A673 (cell line): ENCODE measurements at regions of chr11 and their contacts with region 1.

Region 1: GRCh38 chr11:107928046-107928766 is at the start of gene RAB39A:
- DNase-seq: peak; percentile 99
- H3K4me3 ChIP-seq: peak within 1 kb of the TSS; percentile 65
- H3K27ac ChIP-seq: peak within 1 kb of the TSS; percentile 64
- H3K4me1 ChIP-seq: peaks cover 3% of the 10 kb centered on the region
- H3K27me3 ChIP-seq: peaks cover 13% of the 10 kb centered on the region
- CTCF ChIP-seq: no peak
- total RNA-seq, gene RAB39A: 16.3 and 17.2 TPM in 2 replicates

Region 2: DNA sequence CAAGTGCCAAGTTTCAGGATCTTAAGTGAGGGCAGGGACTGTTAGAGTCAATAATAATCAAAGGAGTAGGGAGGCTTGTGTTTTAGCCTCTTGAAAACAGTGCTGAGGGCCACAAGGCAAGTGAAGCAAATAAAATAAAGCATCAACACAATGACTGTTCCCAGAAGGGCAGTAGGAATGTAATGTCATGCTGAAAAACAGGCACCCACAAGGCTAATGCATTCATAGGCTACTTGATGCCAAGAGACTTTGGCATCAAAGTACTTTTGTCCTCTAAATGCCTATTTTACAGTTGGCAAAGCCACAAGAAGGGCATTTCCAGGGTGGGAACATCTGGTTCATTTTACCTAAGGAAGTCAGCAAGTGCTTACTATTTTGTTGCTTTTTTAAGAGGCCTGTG is 22.9 kb after region 1 on chr11:
- CTCF ChIA-PET with region 1: no interaction called
- POLR2A ChIA-PET with region 1: no interaction called
- intact Hi-C with region 1: no loop called
- DNase-seq: no peak
- H3K4me3 ChIP-seq: no peak overlapping the region
- H3K27ac ChIP-seq: no peak overlapping the region
- H3K4me1 ChIP-seq: peaks cover 2% of the 10 kb centered on the region
- H3K27me3 ChIP-seq: no peaks in the 10 kb centered on the region
- CTCF ChIP-seq: no peak

Region 3: DNA sequence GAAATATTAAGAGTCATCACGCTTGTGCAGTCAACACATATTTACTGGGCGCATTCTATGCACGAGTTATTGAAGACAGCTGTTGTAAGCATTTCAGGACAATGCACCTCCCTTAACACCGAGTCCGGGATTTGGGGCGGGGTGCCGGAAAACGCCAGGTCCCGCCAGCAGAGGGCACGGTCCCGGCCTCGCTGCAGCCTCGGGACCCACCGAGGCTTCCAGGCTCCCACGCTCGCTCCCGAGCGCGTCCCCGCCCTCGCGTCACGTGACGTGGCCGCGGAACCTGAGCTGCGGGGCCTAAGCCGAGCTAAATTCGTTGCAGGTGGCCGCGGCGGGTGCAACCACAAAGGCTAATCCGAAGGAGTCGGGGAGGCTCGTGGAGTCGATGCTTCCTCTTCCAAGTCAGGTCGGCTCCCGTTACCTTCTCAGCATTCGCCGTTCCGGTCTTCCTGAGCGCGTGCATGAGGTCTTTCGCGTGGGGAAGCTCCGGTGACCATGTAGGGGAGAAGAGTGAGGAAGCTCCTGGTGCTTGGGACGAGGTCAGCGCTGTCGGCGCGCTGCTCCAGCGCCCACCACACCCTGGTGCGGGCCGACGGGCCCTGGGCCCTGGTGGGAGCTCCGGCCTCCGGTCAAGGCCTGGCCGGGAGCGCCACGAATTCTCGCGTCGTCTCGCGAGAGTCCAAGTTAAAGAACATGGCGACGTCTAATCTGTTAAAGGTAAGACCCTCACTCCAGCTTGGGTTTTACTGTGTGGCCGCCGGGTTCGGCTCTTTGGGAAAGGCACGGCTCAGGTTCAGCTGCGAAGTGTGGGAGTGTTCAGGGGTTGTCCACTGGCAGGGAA is 80.7 kb after region 1 on chr11 and contains the start of gene CUL5:
- CTCF ChIA-PET with region 1: interaction called, 3 read pairs
- POLR2A ChIA-PET with region 1: no interaction called
- intact Hi-C with region 1: loop called (anchors 5 kb)
- DNase-seq: peak; percentile 97
- H3K4me3 ChIP-seq: peak within 1 kb of the TSS; percentile 95
- H3K27ac ChIP-seq: peak within 1 kb of the TSS; percentile 99
- H3K4me1 ChIP-seq: peaks cover 4% of the 10 kb centered on the region
- H3K27me3 ChIP-seq: no peaks in the 10 kb centered on the region
- CTCF ChIP-seq: peak; percentile 98
- total RNA-seq, gene CUL5: 62.3 and 63.1 TPM in 2 replicates